Heart right ventricle (tissue), 16 donors: ENCODE measurements at regions of chr16 and their contacts with region 1.

Region 1: GRCh38 chr16:50065624-50066481 is at the start of gene HEATR3:
- DNase-seq: peak; percentile 92 to 96
- ATAC-seq: peak; percentile 94 to 98 (median 96)
- H3K4me3 ChIP-seq: peak within 1 kb of the TSS; percentile 70 to 100 (median 92)
- H3K27ac ChIP-seq: peak within 1 kb of the TSS; percentile 87 to 100 (median 96)
- H3K4me1 ChIP-seq: peaks cover 11 to 32% (median 25%) of the 10 kb centered on the region in 9 donors
- H3K27me3 ChIP-seq: no peaks in the 10 kb centered on the region
- CTCF ChIP-seq: peak in 1 of 9 donors; percentile 14
- total RNA-seq, gene HEATR3: 8.7 to 15.8 (median 11.2) TPM

Region 2: GRCh38 chr16:50210266-50211038 is 144.6 kb after region 1 on chr16:
- intact Hi-C with region 1: loop called in 8 of 10 experiments (anchors 2 to 10 kb)
- DNase-seq: peak; percentile 72 to 82
- ATAC-seq: peak; percentile 86 to 95 (median 92)
- H3K4me3 ChIP-seq: no peak overlapping the region
- H3K27ac ChIP-seq: peak overlapping the region in 2 of 10 donors; percentile 9 to 39
- H3K4me1 ChIP-seq: peaks cover 7 to 51% (median 33%) of the 10 kb centered on the region in 9 donors
- H3K27me3 ChIP-seq: no peaks in the 10 kb centered on the region
- CTCF ChIP-seq: peak; percentile 41 to 90 (median 74)